IMR-90 (cell line): ENCODE measurements at regions of chr10 and their contacts with region 1.

Region 1: DNA sequence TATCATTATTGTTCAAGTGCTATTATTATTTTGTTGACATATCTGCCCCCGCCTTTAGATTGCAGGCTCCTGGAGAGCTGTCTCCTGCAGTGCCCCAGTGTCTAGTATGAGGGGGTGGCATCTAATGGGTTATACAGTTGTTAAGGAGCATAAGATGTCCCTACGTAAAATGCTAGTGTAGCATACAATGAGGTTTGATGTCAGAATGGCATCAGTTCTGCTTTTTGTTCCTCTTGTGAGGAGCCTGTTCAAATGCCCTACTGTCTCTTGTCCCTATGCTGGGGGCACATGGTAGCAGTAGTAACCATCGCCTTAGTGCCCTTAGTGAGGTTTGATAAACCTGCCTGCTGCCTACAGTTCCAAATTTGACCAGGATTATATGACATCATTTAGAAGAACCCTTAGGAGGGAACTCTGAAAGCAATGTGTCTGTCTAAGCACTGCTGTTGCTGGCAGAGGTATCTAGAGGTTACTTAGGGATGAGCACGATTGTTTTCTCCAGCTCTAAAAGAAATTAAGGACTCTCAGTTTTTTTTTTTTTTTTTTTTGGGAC is 9.7 kb downstream of the CREM start:
- DNase-seq: no peak
- ATAC-seq: no peak
- H3K4me3 ChIP-seq: no peak overlapping the region
- H3K27ac ChIP-seq: no peak overlapping the region
- H3K4me1 ChIP-seq: peaks cover 4% of the 10 kb centered on the region
- H3K27me3 ChIP-seq: no peaks in the 10 kb centered on the region
- CTCF ChIP-seq: no peak
- POLR2A ChIP-seq: no peak
- RAD21 ChIP-seq: no peak

Region 2: DNA sequence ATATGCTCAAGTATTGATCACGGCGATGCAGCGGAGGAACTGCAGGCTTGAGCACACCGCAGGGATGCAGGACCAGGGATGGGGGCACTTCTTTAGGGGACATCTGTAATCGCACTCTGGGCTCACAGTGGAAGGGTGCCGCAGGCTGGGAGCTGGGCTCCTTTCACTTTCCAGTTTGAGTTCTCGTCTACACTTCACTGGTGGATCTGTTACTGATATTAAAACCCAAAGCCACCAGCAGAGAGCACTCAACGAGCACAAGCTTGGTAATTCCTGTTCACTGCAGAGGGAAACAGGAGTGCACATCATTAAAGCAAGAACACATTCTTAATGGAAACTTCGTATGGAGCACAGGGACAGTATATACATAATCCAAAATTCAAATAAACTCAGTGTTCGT is 412.6 kb before region 1 on chr10:
- CTCF ChIA-PET with region 1: no interaction called
- POLR2A ChIA-PET with region 1: no interaction called
- dilution Hi-C with region 1: no loop called
- in situ Hi-C with region 1: no loop called
- intact Hi-C with region 1: no loop called
- DNase-seq: peak; percentile 78
- ATAC-seq: peak; percentile 76
- H3K4me3 ChIP-seq: no peak overlapping the region
- H3K27ac ChIP-seq: no peak overlapping the region
- H3K4me1 ChIP-seq: peaks cover 9% of the 10 kb centered on the region
- H3K27me3 ChIP-seq: no peaks in the 10 kb centered on the region
- CTCF ChIP-seq: peak; percentile 67
- POLR2A ChIP-seq: no peak
- RAD21 ChIP-seq: peak; percentile 77

Region 3: GRCh38 chr10:35063837-35064454 is 72.4 kb before region 1 on chr10:
- CTCF ChIA-PET with region 1: no interaction called
- POLR2A ChIA-PET with region 1: no interaction called
- dilution Hi-C with region 1: no loop called
- in situ Hi-C with region 1: no loop called
- intact Hi-C with region 1: no loop called
- DNase-seq: no peak
- ATAC-seq: no peak
- H3K4me3 ChIP-seq: no peak overlapping the region
- H3K27ac ChIP-seq: no peak overlapping the region
- H3K4me1 ChIP-seq: peaks cover 7% of the 10 kb centered on the region
- H3K27me3 ChIP-seq: no peaks in the 10 kb centered on the region
- CTCF ChIP-seq: no peak
- POLR2A ChIP-seq: no peak
- RAD21 ChIP-seq: no peak

Region 4: DNA sequence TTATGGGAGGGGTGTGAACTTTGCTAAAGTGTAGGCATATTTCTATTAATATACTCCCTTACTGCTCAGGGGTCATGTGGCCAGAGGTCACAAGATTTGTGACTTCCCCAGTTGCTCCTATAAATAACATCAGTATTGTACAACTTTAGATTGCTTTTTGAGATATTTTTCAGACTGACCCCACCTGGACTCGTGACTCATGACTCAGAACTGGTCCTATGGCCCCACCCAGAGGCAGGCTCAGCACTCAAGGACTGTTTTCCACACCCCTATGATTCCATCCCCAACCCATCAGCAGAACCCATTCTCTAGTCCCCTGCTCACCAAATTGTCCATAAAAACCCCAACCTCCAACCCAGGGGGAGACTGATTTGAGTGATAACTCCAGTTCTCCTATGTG is 43.5 kb before region 1 on chr10:
- CTCF ChIA-PET with region 1: no interaction called
- POLR2A ChIA-PET with region 1: no interaction called
- dilution Hi-C with region 1: no loop called
- in situ Hi-C with region 1: no loop called
- intact Hi-C with region 1: no loop called
- DNase-seq: no peak
- ATAC-seq: no peak
- H3K4me3 ChIP-seq: no peak overlapping the region
- H3K27ac ChIP-seq: no peak overlapping the region
- H3K4me1 ChIP-seq: no peaks in the 10 kb centered on the region
- H3K27me3 ChIP-seq: peaks cover 2% of the 10 kb centered on the region
- CTCF ChIP-seq: no peak
- POLR2A ChIP-seq: no peak
- RAD21 ChIP-seq: no peak

Region 5: DNA sequence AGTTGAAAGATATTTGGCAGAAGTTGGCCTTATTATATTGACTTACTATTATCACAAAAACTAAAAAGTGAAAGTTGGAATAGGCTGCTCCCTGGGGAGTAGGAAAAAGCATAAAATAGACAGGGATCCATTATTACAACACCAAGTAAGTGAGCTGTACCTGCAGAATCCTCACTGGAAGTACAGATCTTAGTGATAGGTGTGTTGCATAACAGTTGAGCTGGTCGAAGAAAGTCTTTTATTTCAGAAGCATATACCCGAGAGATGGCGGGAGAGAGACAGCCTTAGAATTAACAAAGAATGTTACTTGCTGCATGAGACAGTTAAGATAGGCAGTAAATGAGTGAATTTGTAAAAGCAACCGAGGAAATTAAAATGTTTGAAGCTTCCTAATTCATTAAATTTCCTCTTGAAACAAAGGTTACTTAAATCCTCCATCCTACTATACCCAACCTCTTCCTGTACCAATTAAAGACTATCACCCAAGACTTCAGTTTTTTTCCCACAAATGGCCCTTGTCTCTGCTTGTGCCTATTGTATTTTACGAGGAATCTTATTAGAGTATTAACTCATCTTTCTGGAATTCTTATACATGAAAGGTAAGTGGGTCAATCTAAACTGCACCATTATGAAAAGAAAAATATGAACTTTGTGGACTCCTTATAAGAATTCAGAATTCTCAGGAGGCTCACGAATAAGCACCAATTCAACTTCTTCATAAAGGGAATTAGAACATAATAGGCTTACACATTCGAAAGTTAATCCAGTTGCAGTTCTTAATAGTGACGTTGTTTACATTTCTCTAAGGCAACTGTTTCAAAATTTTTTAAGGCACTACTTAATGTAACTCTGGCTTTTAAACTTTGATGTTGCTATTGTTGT is 46.5 kb after region 1 on chr10:
- CTCF ChIA-PET with region 1: no interaction called
- POLR2A ChIA-PET with region 1: no interaction called
- dilution Hi-C with region 1: no loop called
- in situ Hi-C with region 1: no loop called
- intact Hi-C with region 1: loop called (anchors 2 kb)
- DNase-seq: no peak
- ATAC-seq: no peak
- H3K4me3 ChIP-seq: no peak overlapping the region
- H3K27ac ChIP-seq: no peak overlapping the region
- H3K4me1 ChIP-seq: no peaks in the 10 kb centered on the region
- H3K27me3 ChIP-seq: no peaks in the 10 kb centered on the region
- CTCF ChIP-seq: no peak
- POLR2A ChIP-seq: no peak
- RAD21 ChIP-seq: no peak

Region 6: GRCh38 chr10:35398355-35398754 is 262.0 kb after region 1 on chr10:
- CTCF ChIA-PET with region 1: no interaction called
- POLR2A ChIA-PET with region 1: no interaction called
- dilution Hi-C with region 1: no loop called
- in situ Hi-C with region 1: no loop called
- intact Hi-C with region 1: no loop called
- DNase-seq: peak; percentile 57
- ATAC-seq: peak; percentile 54
- H3K4me3 ChIP-seq: no peak overlapping the region
- H3K27ac ChIP-seq: no peak overlapping the region
- H3K4me1 ChIP-seq: peaks cover 21% of the 10 kb centered on the region
- H3K27me3 ChIP-seq: no peaks in the 10 kb centered on the region
- CTCF ChIP-seq: no peak
- POLR2A ChIP-seq: no peak
- RAD21 ChIP-seq: no peak